BJ (cell line): ENCODE measurements at regions of chr5 and their contacts with region 1.

Region 1: DNA sequence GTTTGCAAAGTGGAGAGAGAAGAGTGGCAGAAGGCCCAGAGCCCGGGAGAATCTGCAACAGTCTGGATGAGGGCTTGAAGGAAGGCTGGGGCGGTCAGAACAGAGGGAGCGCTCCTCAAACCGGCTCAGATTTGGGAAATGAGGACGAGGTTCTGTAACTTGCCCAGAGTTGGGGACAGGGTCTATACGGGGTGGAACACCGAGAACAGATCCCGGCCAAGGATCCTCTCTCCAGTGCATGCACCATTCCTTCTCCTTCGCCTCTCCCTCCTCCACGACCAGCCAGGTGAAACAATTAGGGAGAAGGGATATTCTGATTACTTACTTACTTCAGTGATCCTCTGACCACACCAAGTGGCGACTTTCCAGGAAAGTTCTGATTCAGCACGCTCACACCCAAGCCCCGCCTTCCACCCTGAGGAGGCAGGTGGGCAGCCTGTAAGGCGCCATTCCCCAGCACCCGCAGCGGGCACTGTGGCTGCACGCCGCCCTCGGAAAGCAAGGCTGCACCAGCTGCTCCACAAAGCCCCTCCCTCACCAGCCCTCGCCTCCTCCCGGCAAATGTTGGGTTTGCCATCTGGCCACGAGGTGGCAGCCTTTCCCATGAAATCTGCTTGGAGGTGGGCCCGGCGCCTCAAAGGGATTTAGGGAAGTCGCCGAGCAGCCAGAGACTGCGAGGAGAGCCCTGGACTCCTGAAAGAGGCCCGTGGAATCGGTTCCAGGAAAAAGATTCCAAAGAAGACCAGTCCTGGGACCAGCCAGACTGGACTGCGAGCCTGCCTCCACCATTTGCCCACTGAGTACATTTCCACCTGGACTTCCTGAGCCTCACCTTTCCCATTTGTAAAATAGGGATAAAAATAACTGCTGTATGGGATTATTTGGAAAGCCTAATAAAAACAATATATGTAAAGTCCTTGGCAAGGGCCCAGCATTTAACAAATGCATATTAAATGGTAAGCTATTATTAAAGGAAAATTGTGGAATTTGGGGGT is 22.2 kb upstream of the WWC1 start:
- DNase-seq: no peak
- H3K4me3 ChIP-seq: peak overlapping the region; percentile 30
- H3K27me3 ChIP-seq: peaks cover 2% of the 10 kb centered on the region
- CTCF ChIP-seq: peak; percentile 88

Region 2: DNA sequence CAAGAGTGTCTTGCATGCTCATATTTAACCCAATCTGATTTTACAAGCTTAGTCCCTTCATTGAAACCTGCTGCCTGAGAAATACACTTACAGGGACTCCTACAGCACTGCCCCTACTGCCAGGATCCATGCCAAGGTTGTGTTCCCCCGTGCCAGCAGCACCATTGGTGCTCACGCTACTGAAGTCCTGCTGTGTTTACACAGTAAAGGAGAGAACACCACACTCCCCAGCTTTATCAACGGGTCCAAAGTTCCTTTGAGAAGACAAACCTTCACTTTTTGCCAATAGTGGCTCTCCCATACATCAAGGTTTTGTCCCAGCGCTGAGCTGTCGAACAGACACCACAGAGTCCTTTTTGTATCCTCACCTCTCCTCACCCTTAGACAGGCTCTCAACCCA is 132.9 kb before region 1 on chr5:
- CTCF ChIA-PET with region 1: no interaction called
- POLR2A ChIA-PET with region 1: no interaction called
- DNase-seq: no peak
- H3K4me3 ChIP-seq: no peak overlapping the region
- H3K27me3 ChIP-seq: no peaks in the 10 kb centered on the region
- CTCF ChIP-seq: no peak

Region 3: GRCh38 chr5:168282120-168282519 is 12.9 kb after region 1 on chr5:
- CTCF ChIA-PET with region 1: interaction called, 12 read pairs
- POLR2A ChIA-PET with region 1: no interaction called
- DNase-seq: no peak
- H3K4me3 ChIP-seq: no peak overlapping the region
- H3K27me3 ChIP-seq: peaks cover 12% of the 10 kb centered on the region
- CTCF ChIP-seq: no peak

Region 4: DNA sequence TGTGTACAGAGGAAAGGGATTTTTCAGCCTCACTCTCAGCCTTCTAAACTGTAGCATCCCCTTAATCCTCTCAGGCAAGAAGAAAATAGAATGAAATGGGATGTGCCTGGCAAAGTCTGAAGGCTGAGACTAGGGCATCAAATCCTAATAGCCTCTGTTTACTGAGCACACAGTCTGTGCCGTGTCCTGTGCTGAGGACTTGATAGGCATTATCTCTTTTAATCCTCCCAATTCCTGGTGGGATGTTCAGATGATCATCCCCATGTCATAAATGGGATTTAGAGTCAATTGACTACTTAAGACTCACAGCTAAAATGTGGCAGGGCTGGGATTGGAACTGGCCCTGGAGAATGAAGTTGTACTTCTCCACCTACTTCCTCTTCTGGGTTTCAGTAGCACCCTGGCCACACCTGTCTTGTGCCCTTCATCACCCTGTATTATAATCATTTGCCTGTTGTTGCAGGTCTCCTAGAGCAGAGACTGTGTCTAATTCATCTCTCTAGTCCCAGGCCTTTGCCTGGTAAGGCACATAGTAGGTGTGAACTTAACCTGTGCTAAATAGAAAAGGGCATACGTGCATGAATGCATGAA is 103.2 kb after region 1 on chr5:
- CTCF ChIA-PET with region 1: no interaction called
- POLR2A ChIA-PET with region 1: no interaction called
- DNase-seq: no peak
- H3K4me3 ChIP-seq: no peak overlapping the region
- H3K27me3 ChIP-seq: no peaks in the 10 kb centered on the region
- CTCF ChIP-seq: no peak

Region 5: DNA sequence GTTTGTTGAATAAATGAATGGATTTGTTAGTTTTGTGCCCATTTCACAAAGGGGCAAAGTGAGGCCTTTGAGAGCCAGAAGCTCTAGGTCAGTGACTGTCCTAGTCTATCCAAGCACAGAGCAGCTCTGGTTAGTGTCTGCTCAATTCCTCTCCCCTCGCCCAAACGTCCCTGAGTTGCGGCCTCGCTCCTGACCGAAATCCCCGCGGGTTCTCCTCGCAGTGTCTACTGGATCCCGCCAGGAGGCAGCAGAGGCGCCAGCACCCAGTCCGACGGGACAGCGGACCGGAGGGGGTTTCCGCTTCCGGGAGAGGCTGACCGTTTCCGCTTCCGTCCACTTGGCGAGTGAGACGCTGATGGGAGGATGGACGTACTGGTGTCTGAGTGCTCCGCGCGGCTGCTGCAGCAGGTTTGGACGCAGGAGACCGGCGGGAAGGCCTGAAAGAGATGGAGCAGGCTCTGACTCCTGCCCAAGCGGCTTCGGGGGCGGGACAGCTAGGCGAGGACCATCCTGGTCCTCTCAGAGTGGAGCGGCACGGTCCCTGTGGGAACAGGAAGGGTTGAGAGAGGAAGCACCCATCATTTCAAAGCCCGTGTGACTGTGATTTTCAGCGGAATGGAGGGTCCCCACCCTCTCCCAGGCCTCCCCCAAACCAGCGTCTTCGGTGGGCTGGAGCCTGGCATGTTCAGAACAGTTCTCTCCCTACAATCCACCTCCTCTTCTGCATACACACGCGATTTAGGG is 217.1 kb after region 1 on chr5 and contains the start of gene RARS1:
- CTCF ChIA-PET with region 1: interaction called, 17 read pairs
- POLR2A ChIA-PET with region 1: no interaction called
- DNase-seq: no peak
- H3K4me3 ChIP-seq: peak within 1 kb of the TSS; percentile 87
- H3K27me3 ChIP-seq: no peaks in the 10 kb centered on the region
- CTCF ChIP-seq: peak; percentile 99
- polyA plus RNA-seq, gene RARS1: 32.2 and 74.6 TPM in 2 replicates